ENCODE measurements at regions of chr6 and their contacts with region 1.

Region 1: DNA sequence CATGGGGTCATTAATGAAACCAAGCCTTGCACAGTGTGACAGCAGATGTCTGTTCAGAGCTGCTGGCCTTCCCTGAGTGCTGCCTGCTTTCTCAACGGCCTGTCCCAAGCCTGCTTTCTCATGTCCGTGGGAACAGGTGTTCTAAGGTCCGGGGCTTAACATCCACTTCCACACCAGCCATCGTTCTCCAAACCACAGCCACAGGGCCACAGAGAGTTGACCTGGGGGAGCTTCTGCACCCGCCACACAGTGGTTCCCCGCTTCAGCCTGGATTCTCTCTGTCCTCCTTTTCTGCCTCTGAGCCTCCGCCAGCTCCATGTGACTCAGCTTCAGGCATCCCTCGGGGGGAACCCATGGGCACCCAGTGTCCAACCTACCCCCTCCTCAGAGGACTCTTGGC is 26.9 kb upstream of the PPP1R3G start:
- DNase-seq: no peak
- ATAC-seq: no peak
- H3K4me3 Mint-ChIP-seq: no peak overlapping the region
- H3K27ac Mint-ChIP-seq: no peak overlapping the region
- H3K4me1 Mint-ChIP-seq: peaks cover 9% of the 10 kb centered on the region
- H3K27me3 Mint-ChIP-seq: no peaks in the 10 kb centered on the region
- CTCF ChIP-seq: no peak

Region 2: DNA sequence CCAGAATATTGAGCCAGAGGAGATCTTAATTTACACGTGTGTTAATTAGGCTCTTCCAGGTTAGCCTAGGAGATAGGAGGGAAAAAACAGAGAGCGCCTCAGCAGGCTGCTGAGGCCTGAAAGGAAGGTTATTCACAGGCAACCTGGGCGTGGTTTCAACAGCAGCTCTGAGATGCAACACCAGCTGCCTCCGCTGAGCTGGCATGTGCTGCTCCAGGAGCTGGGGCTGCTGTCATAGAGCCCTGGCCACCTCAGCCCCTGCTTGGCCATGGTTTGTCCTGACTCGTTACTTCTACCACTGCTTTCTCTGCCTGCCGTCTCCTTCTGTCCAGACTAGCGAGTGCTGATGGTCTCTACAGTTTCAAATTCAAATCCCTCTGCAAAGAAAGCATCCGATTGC is 22.0 kb before region 1 on chr6:
- CTCF ChIA-PET with region 1: interaction called, 11 read pairs
- POLR2A ChIA-PET with region 1: no interaction called
- DNase-seq: peak; percentile 79
- ATAC-seq: peak; percentile 97
- H3K4me3 Mint-ChIP-seq: no peak overlapping the region
- H3K27ac Mint-ChIP-seq: no peak overlapping the region
- H3K4me1 Mint-ChIP-seq: peaks cover 41% of the 10 kb centered on the region
- H3K27me3 Mint-ChIP-seq: peaks cover 7% of the 10 kb centered on the region
- CTCF ChIP-seq: no peak

Region 3: GRCh38 chr6:5085193-5085647 is 27.0 kb after region 1 on chr6 and contains the start of gene PPP1R3G:
- CTCF ChIA-PET with region 1: interaction called, 17 read pairs
- POLR2A ChIA-PET with region 1: no interaction called
- DNase-seq: peak; percentile 29
- ATAC-seq: peak; percentile 23
- H3K4me3 Mint-ChIP-seq: peak within 1 kb of the TSS; percentile 79
- H3K27ac Mint-ChIP-seq: no peak within 1 kb of the TSS
- H3K4me1 Mint-ChIP-seq: peaks cover 10% of the 10 kb centered on the region
- H3K27me3 Mint-ChIP-seq: peaks cover 71% of the 10 kb centered on the region
- CTCF ChIP-seq: no peak
- total RNA-seq, gene PPP1R3G: 0.15 to 0.48 TPM (median 0.48 TPM) in 3 replicates

Region 4: DNA sequence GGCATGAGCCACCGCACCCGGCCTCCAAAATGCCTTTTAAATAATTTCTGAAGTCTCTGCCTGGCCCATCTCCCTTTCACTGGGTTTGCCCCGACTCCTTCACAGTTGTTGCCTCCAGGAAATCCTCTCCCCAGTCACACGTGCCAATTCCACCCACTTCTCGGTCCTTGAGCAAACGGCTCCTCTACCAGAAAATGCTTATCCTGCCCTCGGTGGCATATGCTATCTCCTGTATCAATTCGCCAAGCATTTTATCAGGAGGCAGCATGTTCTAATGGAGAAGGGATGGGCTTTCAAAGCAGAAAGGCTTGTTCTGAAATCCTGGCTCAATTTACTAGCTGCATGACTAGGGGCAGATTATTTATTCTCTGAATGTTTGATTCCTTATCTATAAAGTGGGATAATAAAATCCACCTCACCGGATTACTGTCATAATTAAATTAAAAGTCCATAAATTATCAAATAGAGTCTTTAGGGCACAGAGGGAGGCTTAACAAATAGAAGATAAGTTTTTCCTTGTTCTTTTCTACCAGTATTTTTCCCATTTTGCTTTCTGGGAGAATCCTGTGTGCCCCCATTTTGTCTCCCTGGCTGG is 93.2 kb after region 1 on chr6:
- CTCF ChIA-PET with region 1: no interaction called
- POLR2A ChIA-PET with region 1: no interaction called
- DNase-seq: no peak
- ATAC-seq: no peak
- H3K4me3 Mint-ChIP-seq: no peak overlapping the region
- H3K27ac Mint-ChIP-seq: no peak overlapping the region
- H3K4me1 Mint-ChIP-seq: peaks cover 2% of the 10 kb centered on the region; the same call in 1 of the 2 replicates
- H3K27me3 Mint-ChIP-seq: no peaks in the 10 kb centered on the region; the same call in 1 of the 2 replicates
- CTCF ChIP-seq: no peak

Region 5: DNA sequence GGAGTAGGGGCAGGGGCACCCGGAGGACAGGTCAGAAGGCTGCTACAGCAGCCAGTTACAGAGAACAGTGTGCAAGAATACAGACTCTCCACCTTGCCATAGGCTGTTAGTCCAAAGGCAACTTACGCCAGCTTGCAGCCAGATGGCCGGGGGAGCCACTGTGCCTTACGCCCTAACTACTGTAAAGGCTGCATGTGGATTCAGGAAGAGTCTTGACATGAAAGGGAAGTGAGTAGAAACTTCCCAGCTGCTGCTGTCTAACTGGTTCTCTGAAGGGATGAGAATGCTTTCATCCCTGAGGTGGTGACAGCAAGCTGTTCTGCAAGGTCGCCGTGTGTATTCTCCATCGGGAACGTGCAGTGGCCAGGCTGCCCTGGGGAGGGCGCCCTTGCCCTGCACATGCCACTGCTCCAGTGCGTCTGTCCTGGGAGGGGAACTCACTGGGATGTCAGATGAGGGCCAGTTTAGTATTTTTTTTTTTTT is 156.4 kb after region 1 on chr6:
- CTCF ChIA-PET with region 1: interaction called, 25 read pairs
- POLR2A ChIA-PET with region 1: no interaction called
- DNase-seq: peak; percentile 82
- ATAC-seq: peak; percentile 98
- H3K4me3 Mint-ChIP-seq: no peak overlapping the region
- H3K27ac Mint-ChIP-seq: no peak overlapping the region
- H3K4me1 Mint-ChIP-seq: peaks cover 20% of the 10 kb centered on the region
- H3K27me3 Mint-ChIP-seq: no peaks in the 10 kb centered on the region
- CTCF ChIP-seq: peak; percentile 94

Region 6: GRCh38 chr6:5287205-5287965 is 229.1 kb after region 1 on chr6:
- CTCF ChIA-PET with region 1: no interaction called
- POLR2A ChIA-PET with region 1: no interaction called
- DNase-seq: no peak
- ATAC-seq: no peak
- H3K4me3 Mint-ChIP-seq: no peak overlapping the region
- H3K27ac Mint-ChIP-seq: 0 out of 2 replicates have a peak overlapping the region, but pooled peaks have one; percentile 71
- H3K4me1 Mint-ChIP-seq: peaks cover 5% of the 10 kb centered on the region
- H3K27me3 Mint-ChIP-seq: no peaks in the 10 kb centered on the region
- CTCF ChIP-seq: no peak

Region 7: GRCh38 chr6:5379647-5380242 is 321.5 kb after region 1 on chr6:
- CTCF ChIA-PET with region 1: interaction called, 16 read pairs
- POLR2A ChIA-PET with region 1: no interaction called
- DNase-seq: peak; percentile 61
- ATAC-seq: peak; percentile 84
- H3K4me3 Mint-ChIP-seq: no peak overlapping the region
- H3K27ac Mint-ChIP-seq: no peak overlapping the region
- H3K4me1 Mint-ChIP-seq: peaks cover 8% of the 10 kb centered on the region
- H3K27me3 Mint-ChIP-seq: no peaks in the 10 kb centered on the region
- CTCF ChIP-seq: peak; percentile 58; the same call in 1 of the 2 replicates

Region 8: DNA sequence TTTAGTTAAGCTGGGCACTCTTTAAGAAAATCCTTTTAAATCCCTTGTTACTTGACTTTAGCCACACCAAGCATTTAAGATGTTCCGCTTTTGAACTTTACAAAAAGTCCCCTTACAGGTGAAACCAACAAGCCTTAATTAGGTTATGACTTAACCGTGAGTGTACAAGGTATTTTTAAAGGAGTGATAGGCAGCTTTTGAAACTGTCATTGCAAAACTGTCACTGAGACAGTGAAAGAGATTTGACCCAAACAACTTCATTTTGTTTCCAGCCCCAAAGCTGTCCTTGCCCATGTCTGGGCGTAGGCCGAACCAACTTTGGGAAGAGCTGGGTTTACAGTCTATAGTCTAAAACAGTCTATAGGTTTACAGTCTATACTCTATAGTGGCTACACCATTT is 508.5 kb after region 1 on chr6:
- CTCF ChIA-PET with region 1: no interaction called
- POLR2A ChIA-PET with region 1: no interaction called
- DNase-seq: no peak
- ATAC-seq: no peak
- H3K4me3 Mint-ChIP-seq: no peak overlapping the region
- H3K27ac Mint-ChIP-seq: no peak overlapping the region
- H3K4me1 Mint-ChIP-seq: peaks cover 31% of the 10 kb centered on the region
- H3K27me3 Mint-ChIP-seq: no peaks in the 10 kb centered on the region
- CTCF ChIP-seq: no peak

Measured in WTC11 (cell line).